ENCODE measurements at regions of chr19 and their contacts with region 1.

Region 1: DNA sequence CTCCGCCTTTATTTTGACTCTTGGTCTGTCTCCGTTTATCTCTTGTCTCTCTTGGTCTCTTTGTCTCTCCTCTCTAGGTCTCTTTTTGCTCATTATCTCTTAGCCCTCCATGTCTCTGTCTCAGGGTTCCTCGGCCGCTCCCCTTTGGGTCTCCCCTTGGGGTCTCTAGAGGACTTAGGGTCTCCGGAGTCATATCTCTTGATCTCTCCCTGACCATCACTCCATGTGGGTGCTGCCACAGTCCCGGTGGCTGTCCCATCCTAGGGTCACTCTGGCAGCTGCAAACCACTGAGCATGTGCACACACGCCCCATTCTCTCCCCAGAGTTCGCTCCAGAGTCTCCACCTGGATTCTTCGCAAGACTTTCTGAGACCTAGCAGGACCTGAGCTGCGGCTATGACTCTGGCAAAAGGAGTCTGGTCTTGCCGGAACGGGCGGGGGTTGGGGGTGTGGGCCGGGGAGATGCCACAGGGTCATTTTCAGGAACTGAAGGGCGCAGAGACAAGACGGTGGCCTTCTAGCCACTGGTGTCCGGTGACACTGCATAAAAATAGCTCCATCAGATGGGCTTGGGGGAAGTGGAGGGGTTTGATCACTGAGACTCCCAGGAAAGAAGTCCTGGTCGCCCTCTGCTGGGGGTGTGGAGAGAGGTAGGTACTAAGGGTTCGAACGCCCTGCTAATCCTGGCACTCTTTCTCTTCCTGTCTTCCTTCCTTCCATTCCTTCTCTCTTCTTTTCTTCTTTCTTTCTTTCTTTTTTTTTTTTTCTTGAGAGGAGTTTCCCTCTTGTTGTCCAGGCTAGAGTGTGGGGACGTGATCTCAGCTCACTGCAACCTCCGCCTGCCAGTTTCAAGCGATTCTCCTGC is 1.2 kb upstream of the KCNA7 start:
- H3K4me3 ChIP-seq: no peak overlapping the region
- H3K27ac ChIP-seq: no peak overlapping the region
- H3K4me1 ChIP-seq: no peaks in the 10 kb centered on the region
- CTCF ChIP-seq: peak; percentile 66

Region 2: DNA sequence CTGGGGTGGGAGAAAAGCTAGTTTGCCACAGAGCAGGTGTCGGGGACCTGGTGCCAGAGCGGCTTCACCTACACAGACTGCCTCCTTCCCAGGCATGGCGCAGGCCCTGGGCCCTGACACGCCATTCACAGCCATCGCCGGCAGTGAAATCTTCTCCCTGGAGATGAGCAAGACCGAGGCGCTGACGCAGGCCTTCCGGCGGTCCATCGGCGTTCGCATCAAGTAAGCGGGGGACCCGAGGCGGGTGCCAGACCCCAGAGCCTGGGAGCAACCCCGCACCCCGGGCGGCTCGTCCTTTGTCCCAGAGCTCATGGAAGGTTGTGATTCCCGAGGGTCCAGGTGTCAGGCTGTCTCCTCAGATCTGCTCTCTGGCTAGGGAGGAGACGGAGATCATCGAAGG is 66.8 kb before region 1 on chr19:
- CTCF ChIA-PET with region 1: interaction called, 23 read pairs
- POLR2A ChIA-PET with region 1: no interaction called
- H3K4me3 ChIP-seq: no peak overlapping the region
- H3K27ac ChIP-seq: no peak overlapping the region
- H3K4me1 ChIP-seq: no peaks in the 10 kb centered on the region
- CTCF ChIP-seq: no peak

Region 3: DNA sequence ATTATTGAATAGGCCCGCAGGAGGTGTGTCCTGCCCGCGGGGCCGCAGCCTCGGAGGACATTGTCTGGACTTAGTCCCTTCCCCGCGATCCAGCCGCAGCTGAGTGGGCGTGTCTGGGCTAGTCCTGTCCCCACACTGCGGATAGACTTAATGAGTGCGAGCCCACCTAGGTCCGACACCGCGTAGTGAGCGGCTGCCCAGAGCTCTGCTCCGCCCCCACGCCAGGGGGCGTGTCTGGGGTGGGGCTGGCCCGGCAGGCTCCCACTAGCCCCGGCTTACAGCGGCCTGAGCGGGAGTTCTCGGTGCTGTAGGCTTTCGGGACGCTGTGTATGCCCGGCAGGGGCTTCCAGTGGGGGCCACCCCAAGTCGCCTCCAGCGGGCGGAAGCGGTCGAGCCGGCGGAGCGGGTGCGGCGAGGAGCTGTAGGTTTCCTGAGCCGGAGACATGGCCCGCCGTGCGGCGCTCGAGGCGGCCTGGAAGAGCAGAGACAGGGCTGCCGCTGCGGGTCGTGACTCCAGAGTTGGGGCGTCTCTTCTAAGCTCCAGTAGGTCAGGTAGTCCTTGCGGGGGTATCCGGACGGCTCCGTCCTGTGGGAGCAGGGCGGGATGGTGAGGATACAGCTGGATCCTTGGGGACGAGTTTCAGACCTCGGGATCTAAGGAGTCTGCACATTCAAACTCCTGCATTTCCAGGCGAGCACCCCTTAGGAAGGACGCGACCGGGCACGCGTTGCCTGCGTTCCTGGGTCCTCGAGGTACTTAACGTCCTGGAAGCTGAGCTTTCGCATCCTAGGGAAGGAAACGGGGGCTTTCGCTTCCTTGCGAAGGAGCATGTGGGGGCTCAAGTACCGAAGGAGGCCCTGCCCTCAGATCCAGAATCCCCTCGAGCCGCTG is 17.5 kb before region 1 on chr19:
- CTCF ChIA-PET with region 1: interaction called, 18 read pairs
- POLR2A ChIA-PET with region 1: interaction called, 3 read pairs
- H3K4me3 ChIP-seq: peak overlapping the region; percentile 44
- H3K27ac ChIP-seq: no peak overlapping the region; the same call in 1 of the 2 replicates
- H3K4me1 ChIP-seq: no peaks in the 10 kb centered on the region; the same call in 1 of the 2 replicates
- CTCF ChIP-seq: peak; percentile 81

Region 4: GRCh38 chr19:49085020-49085867 is 11.5 kb after region 1 on chr19 and contains the start of gene SNRNP70:
- CTCF ChIA-PET with region 1: interaction called, 10 read pairs
- POLR2A ChIA-PET with region 1: interaction called, 5 read pairs
- H3K4me3 ChIP-seq: peak within 1 kb of the TSS; percentile 89
- H3K27ac ChIP-seq: peak within 1 kb of the TSS; percentile 92
- H3K4me1 ChIP-seq: peaks cover 5% of the 10 kb centered on the region; the same call in 1 of the 2 replicates
- CTCF ChIP-seq: peak; percentile 65; the same call in 1 of the 2 replicates

Region 5: GRCh38 chr19:49127674-49128544 is 54.2 kb after region 1 on chr19:
- CTCF ChIA-PET with region 1: no interaction called
- POLR2A ChIA-PET with region 1: no interaction called
- H3K4me3 ChIP-seq: peak overlapping the region; percentile 53
- H3K27ac ChIP-seq: peak overlapping the region; percentile 60; the same call in 1 of the 2 replicates
- H3K4me1 ChIP-seq: peaks cover 7% of the 10 kb centered on the region
- CTCF ChIP-seq: peak; percentile 85

Region 6: GRCh38 chr19:49210108-49210900 is 136.6 kb after region 1 on chr19:
- CTCF ChIA-PET with region 1: interaction called, 16 read pairs
- POLR2A ChIA-PET with region 1: interaction called, 3 read pairs
- H3K4me3 ChIP-seq: no peak overlapping the region
- H3K27ac ChIP-seq: no peak overlapping the region
- H3K4me1 ChIP-seq: peaks cover 6% of the 10 kb centered on the region; the same call in 1 of the 2 replicates
- CTCF ChIP-seq: no peak

Measured in HEK293 (cell line).